Common myeloid progenitor, CD34-positive (primary cell): ENCODE measurements at regions of chr6 and their contacts with region 1.

Region 1: GRCh38 chr6:44655412-44656342 is 268.2 kb downstream of the CDC5L start:
- DNase-seq: peak; percentile 75 to 88 (median 87)
- H3K4me3 ChIP-seq: peak overlapping the region in 3 of 7 experiments; percentile 27 to 53 (median 35)
- H3K27ac ChIP-seq: no peak overlapping the region
- H3K4me1 ChIP-seq: peaks cover 0 to 23% (median 16%) of the 10 kb centered on the region in 4 experiments
- H3K27me3 ChIP-seq: no peaks in the 10 kb centered on the region

Region 2: DNA sequence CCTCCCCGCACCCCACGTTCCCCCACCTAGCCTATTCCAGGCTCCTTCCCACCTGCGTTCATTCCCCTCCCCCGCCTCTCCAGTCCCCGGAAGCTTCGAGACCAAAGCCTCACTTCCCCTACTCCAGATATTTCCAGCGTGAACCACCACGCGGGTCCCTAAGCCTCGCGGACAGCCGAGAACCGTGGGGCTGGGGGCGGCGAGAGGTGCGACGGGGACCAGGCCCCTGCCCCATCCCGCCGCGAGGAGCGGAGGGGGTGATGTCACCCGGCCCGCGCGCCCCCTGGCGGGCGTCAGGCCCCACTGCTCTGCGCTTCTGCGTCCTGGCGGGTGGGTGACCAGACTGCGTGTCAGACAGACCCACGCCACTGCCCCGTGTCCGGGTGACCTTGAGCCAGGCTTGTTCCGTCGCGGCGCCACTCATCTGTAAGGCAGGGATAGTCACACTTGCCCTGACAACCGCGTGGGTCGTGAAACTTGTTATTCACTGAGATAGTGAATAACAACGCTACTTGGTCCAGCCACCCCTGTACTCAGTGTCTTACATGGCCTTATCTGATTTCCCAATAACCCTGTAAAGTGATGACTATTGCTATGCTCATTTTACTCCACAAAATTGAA is 417.8 kb before region 1 on chr6:
- CTCF ChIA-PET with region 1: no interaction called
- POLR2A ChIA-PET with region 1: no interaction called
- DNase-seq: peak; percentile 64 to 87 (median 84)
- H3K4me3 ChIP-seq: peak overlapping the region; percentile 39 to 82 (median 64)
- H3K27ac ChIP-seq: peak overlapping the region in 1 of 2 experiments; percentile 86
- H3K4me1 ChIP-seq: peaks cover 0 to 38% (median 32%) of the 10 kb centered on the region in 4 experiments
- H3K27me3 ChIP-seq: no peaks in the 10 kb centered on the region

Region 3: DNA sequence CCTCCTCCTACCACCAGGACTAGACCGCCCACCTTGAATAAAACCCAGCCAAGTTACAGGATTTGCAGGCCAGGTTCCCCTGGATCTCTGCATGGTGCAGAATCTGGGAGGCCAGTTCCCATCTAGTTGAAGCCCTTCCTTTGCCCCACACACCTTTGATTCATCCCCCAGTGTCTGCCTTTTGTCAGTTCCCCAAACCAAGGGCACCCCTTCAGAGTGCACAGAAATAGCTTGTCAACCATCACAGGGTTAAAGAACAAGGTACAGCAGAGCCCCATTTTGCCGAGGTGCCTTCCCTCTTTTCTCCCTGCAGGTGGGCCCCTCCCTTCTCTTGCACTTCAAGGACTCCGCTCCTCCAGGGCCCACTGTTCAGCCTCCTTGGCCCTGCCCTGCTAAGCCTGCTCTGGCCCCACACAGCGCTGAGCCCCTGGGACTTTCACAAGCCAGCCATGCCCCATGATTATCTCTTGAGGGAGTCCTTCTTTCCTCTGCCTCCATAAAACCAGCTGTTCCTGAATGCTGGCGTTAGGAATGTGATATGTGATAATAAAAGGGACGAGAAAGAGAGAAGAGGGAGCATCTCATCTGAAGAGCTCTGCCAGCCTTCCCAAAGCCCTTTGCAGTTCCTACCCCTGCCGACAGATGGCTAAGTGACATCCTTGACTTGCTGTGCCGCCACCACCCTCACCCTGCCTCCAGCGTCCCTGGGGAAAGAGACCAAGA is 12.2 kb after region 1 on chr6:
- CTCF ChIA-PET with region 1: interaction called, 14 read pairs
- POLR2A ChIA-PET with region 1: no interaction called
- DNase-seq: peak in 2 of 3 donors; percentile 8 to 36
- H3K4me3 ChIP-seq: no peak overlapping the region
- H3K27ac ChIP-seq: no peak overlapping the region
- H3K4me1 ChIP-seq: peaks cover 0 to 1% (median 0%) of the 10 kb centered on the region in 4 experiments
- H3K27me3 ChIP-seq: peaks cover 0 to 2% (median 0%) of the 10 kb centered on the region in 5 experiments